Adrenal gland (tissue), 19 donors: ENCODE measurements at regions of chr3 and their contacts with region 1.

Region 1: DNA sequence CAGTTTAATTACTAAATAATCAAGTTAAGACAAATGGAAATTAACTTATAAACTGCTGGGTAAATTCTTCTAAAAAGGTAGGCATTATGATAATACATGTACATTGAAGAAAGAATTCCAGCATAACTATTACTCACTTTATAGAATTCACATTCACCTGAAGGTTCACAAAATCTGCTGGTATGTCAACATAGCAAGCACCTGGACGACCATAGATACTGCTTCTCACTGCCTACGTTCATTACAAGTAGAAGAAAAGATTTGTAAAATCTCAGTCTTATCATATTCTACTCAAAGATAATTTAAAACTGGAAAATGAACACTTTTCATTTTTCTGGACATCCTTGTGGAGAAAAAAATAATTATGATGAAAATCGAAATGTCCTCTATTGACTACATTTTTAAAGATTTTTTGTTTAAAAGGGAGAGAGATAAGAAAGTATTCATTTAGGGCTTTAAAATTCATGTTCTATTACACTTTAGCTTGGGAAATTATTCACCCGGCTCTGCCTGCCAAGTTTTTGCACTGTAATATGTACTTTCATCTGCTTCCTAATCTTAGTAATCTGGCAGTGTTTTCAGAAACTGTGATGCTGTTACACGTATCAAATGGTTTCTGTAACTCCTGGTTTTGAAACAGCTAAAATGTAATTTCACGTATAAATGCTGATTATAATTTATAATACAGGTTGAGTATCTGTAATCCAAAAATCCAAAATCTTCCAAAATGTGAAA is 16.1 kb downstream of the HACL1 start:
- DNase-seq: peak in 2 of 7 donors; percentile 20 to 33
- H3K4me3 ChIP-seq: no peak overlapping the region
- H3K27ac ChIP-seq: peak overlapping the region in 2 of 5 donors; percentile 11 to 48
- H3K4me1 ChIP-seq: peaks cover 0 to 7% of the 10 kb centered on the region in 2 donors
- H3K27me3 ChIP-seq: no peaks in the 10 kb centered on the region
- CTCF ChIP-seq: no peak
- POLR2A ChIP-seq: no peak

Region 2: GRCh38 chr3:15223685-15224572 is 361.3 kb before region 1 on chr3:
- intact Hi-C with region 1: loop called in 1 of 2 experiments (anchors 10 kb)
- DNase-seq: no peak
- H3K4me3 ChIP-seq: no peak overlapping the region
- H3K27ac ChIP-seq: no peak overlapping the region
- H3K4me1 ChIP-seq: peaks cover 0 to 10% of the 10 kb centered on the region in 2 donors
- H3K27me3 ChIP-seq: no peaks in the 10 kb centered on the region
- CTCF ChIP-seq: no peak
- POLR2A ChIP-seq: no peak